BJ (cell line): ENCODE measurements at regions of chr6 and their contacts with region 1.

Region 1: GRCh38 chr6:31493875-31494694 is 3.9 kb upstream of the MICB start:
- DNase-seq: no peak
- H3K4me3 ChIP-seq: peak overlapping the region; percentile 71
- H3K27me3 ChIP-seq: no peaks in the 10 kb centered on the region
- CTCF ChIP-seq: peak; percentile 95

Region 2: DNA sequence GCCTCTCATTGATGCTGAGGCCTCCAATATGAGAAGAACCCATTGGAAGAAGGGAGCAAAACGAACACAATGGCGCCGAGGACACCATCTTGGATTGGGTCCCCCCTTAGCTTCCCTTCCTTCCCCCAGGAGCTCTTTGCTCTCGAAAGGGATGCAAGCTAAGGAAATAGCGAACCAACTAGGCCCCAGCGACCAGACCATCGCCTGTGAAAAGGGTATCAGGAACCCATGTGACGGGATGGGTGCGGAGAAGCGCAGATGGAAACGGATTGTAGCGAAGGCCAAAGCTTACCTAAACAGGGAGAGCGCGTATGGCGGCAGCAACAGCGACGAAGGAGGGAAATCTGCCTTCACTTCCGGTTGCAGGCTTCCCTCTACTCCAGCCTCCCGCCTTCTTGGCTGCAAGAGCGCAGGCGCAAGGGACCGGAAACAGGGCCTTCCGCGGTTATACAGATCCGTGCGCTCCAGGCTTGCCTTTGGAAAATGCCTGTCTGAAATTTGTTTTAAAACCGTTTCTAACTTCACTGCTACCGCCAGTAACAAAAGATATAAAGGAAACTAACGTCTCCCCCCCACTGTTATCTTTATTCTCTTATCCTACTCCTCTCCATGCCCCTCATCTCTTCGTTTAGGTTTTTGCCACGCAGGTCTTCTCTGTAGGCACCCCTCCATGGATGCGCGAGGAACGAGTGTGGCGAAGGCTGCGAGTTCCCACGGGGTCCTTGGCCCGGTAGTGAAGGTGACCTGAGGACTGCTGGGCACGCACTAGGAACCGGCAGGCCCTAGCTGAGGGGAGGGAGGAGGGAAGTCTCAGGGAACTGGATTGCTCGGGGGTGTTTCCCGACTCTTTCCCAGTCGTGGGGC is 47.8 kb after region 1 on chr6 and contains the start of gene DDX39B:
- CTCF ChIA-PET with region 1: interaction called, 20 read pairs
- POLR2A ChIA-PET with region 1: interaction called, 5 read pairs
- DNase-seq: peak; percentile 85
- H3K4me3 ChIP-seq: peak within 1 kb of the TSS; percentile 67
- H3K27me3 ChIP-seq: no peaks in the 10 kb centered on the region
- CTCF ChIP-seq: no peak
- polyA plus RNA-seq, gene DDX39B: 412 and 584 TPM in 2 replicates